ENCODE measurements at regions of chr2 and their contacts with region 1.

Region 1: GRCh38 chr2:216412022-216412999 is at the start of gene SMARCAL1:
- DNase-seq: peak; percentile 96
- ATAC-seq: peak; percentile 93
- H3K4me3 Mint-ChIP-seq: peak within 1 kb of the TSS; percentile 97
- H3K27ac Mint-ChIP-seq: peak within 1 kb of the TSS; percentile 97
- H3K4me1 Mint-ChIP-seq: peaks cover 31% of the 10 kb centered on the region
- H3K27me3 Mint-ChIP-seq: peaks cover 9% of the 10 kb centered on the region
- CTCF ChIP-seq: no peak
- total RNA-seq, gene SMARCAL1: 31.5 and 34.3 TPM in 2 replicates

Region 2: GRCh38 chr2:214809751-214810564 is 1602.4 kb before region 1 on chr2:
- CTCF ChIA-PET with region 1: no interaction called
- POLR2A ChIA-PET with region 1: no interaction called
- intact Hi-C with region 1: loop called (anchors 2 kb)
- DNase-seq: peak; percentile 100
- ATAC-seq: peak; percentile 85
- H3K4me3 Mint-ChIP-seq: peak overlapping the region; percentile 98
- H3K27ac Mint-ChIP-seq: peak overlapping the region; percentile 92
- H3K4me1 Mint-ChIP-seq: peaks cover 35% of the 10 kb centered on the region
- H3K27me3 Mint-ChIP-seq: no peaks in the 10 kb centered on the region
- CTCF ChIP-seq: no peak

Region 3: GRCh38 chr2:216013080-216013909 is 399.0 kb before region 1 on chr2 and contains the start of gene MREG:
- CTCF ChIA-PET with region 1: no interaction called
- POLR2A ChIA-PET with region 1: no interaction called
- intact Hi-C with region 1: loop called (anchors 2 kb)
- DNase-seq: peak; percentile 79
- ATAC-seq: peak; percentile 84
- H3K4me3 Mint-ChIP-seq: peak within 1 kb of the TSS; percentile 89
- H3K27ac Mint-ChIP-seq: peak within 1 kb of the TSS; percentile 76
- H3K4me1 Mint-ChIP-seq: peaks cover 66% of the 10 kb centered on the region
- H3K27me3 Mint-ChIP-seq: no peaks in the 10 kb centered on the region
- CTCF ChIP-seq: no peak
- total RNA-seq, gene MREG: 16.2 and 16.6 TPM in 2 replicates

Region 4: DNA sequence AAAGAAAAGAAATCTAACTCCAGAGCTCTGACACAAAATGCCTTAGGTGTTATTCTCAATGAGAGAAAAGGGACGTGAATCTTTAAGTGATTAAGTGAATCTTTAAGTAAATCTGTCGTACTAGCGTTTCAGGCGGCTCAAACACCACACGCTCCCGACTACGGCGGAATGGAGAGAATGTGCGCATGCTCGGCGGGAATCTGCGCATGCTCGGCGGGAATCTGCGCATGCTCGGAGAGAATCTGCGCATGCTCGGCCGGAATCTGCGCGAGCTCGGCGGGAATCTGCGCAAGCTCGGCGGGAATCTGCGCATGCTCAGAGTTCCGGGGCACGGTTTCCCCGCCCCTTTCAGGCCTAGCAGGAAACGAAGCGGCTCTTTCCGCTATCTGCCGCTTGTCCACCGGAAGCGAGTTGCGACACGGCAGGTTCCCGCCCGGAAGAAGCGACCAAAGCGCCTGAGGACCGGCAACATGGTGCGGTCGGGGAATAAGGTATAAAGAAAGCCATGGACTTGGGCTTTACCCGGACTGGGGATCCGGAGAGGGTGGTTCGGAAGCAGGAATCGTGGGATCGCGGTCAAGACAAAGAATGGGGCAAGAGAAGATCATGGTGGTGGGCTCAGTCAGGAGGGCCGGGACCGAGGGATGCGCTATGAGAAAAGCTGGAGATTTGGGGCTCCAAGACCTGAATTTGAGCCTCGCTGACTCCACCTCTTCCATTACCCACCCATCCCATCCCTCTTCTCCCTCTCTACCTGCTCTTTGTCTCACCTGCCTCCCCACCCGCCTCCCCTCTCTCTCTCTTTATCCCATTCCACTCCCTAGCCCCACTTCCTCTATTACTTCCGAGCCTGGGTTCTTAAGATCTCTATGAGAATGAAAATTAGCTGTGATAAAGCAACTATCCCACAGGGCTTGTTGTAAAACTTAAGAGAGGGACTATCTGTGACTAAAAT is 303.1 kb before region 1 on chr2 and contains the start of gene XRCC5:
- CTCF ChIA-PET with region 1: no interaction called
- POLR2A ChIA-PET with region 1: interaction called, 14 read pairs
- intact Hi-C with region 1: loop called (anchors 1 kb)
- DNase-seq: peak; percentile 93
- ATAC-seq: peak; percentile 88
- H3K4me3 Mint-ChIP-seq: peak within 1 kb of the TSS; percentile 99
- H3K27ac Mint-ChIP-seq: peak within 1 kb of the TSS; percentile 99
- H3K4me1 Mint-ChIP-seq: peaks cover 57% of the 10 kb centered on the region
- H3K27me3 Mint-ChIP-seq: no peaks in the 10 kb centered on the region
- CTCF ChIP-seq: no peak
- total RNA-seq, gene XRCC5: 303 and 311 TPM in 2 replicates

Region 5: GRCh38 chr2:216222650-216223352 is 189.5 kb before region 1 on chr2:
- CTCF ChIA-PET with region 1: interaction called, 97 read pairs
- POLR2A ChIA-PET with region 1: interaction called, 12 read pairs
- intact Hi-C with region 1: loop called (anchors 2 kb)
- DNase-seq: peak; percentile 37
- ATAC-seq: peak; percentile 80
- H3K4me3 Mint-ChIP-seq: peak overlapping the region; percentile 64
- H3K27ac Mint-ChIP-seq: peak overlapping the region; percentile 97
- H3K4me1 Mint-ChIP-seq: peaks cover 25% of the 10 kb centered on the region
- H3K27me3 Mint-ChIP-seq: no peaks in the 10 kb centered on the region
- CTCF ChIP-seq: no peak

Region 6: GRCh38 chr2:216498418-216499413 is 86.4 kb after region 1 on chr2 and contains the start of gene RPL37A:
- CTCF ChIA-PET with region 1: no interaction called
- POLR2A ChIA-PET with region 1: interaction called, 17 read pairs
- intact Hi-C with region 1: loop called (anchors 1 kb)
- DNase-seq: peak; percentile 82
- ATAC-seq: peak; percentile 97
- H3K4me3 Mint-ChIP-seq: peak within 1 kb of the TSS; percentile 98
- H3K27ac Mint-ChIP-seq: peak within 1 kb of the TSS; percentile 92
- H3K4me1 Mint-ChIP-seq: peaks cover 63% of the 10 kb centered on the region
- H3K27me3 Mint-ChIP-seq: no peaks in the 10 kb centered on the region
- CTCF ChIP-seq: no peak
- total RNA-seq, gene RPL37A: 4,501 and 5,377 TPM in 2 replicates

Region 7: GRCh38 chr2:217864963-217865772 is 1452.9 kb after region 1 on chr2:
- CTCF ChIA-PET with region 1: no interaction called
- POLR2A ChIA-PET with region 1: no interaction called
- intact Hi-C with region 1: loop called (anchors 10 kb)
- DNase-seq: peak; percentile 31
- ATAC-seq: peak; percentile 93
- H3K4me3 Mint-ChIP-seq: peak overlapping the region; percentile 68
- H3K27ac Mint-ChIP-seq: peak overlapping the region; percentile 84
- H3K4me1 Mint-ChIP-seq: peaks cover 50% of the 10 kb centered on the region
- H3K27me3 Mint-ChIP-seq: peaks cover 3% of the 10 kb centered on the region
- CTCF ChIP-seq: no peak

Measured in activated B cell treated with CpG ODN at 0.5 μM for 24 hours (primary cell).